Activated CD4-positive, alpha-beta T cell treated with anti-CD3 and anti-CD28 coated beads for 36 hours (primary cell): ENCODE measurements at regions of chr15 and their contacts with region 1.

Region 1: GRCh38 chr15:81939604-81940440 is 106.0 kb downstream of the MEX3B start:
- DNase-seq: peak; percentile 46
- ATAC-seq: peak; percentile 19
- H3K4me3 Mint-ChIP-seq: no peak overlapping the region
- H3K27ac Mint-ChIP-seq: no peak overlapping the region
- H3K4me1 Mint-ChIP-seq: no peaks in the 10 kb centered on the region
- H3K27me3 Mint-ChIP-seq: peaks cover 7% of the 10 kb centered on the region

Region 2: GRCh38 chr15:81410318-81410753 is 529.5 kb before region 1 on chr15:
- CTCF ChIA-PET with region 1: interaction called, 3 read pairs
- POLR2A ChIA-PET with region 1: no interaction called
- intact Hi-C with region 1: loop called in 1 of 2 experiments (anchors 1 kb)
- DNase-seq: peak; percentile 24
- ATAC-seq: peak; percentile 69
- H3K4me3 Mint-ChIP-seq: no peak overlapping the region
- H3K27ac Mint-ChIP-seq: no peak overlapping the region
- H3K4me1 Mint-ChIP-seq: peaks cover 14% of the 10 kb centered on the region
- H3K27me3 Mint-ChIP-seq: no peaks in the 10 kb centered on the region

Region 3: DNA sequence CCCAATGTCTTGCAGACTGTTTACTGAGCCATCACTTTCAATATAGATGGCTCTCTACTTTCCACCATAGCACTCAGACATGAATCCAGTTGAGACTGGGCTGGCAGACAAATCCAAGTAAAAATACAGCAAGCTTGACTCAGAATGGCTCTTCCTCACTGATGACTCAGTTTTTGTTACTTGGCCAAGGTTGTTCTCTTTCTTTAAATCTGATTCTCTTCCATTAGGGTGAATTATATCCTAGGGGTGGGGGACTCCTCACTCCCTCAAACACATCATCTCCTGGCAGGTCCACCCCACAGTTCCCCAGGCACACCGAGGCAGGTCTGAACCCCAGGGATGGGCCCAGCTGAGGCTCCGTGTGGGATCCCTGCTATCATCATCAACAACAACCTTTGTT is 51.9 kb before region 1 on chr15:
- CTCF ChIA-PET with region 1: no interaction called
- POLR2A ChIA-PET with region 1: no interaction called
- intact Hi-C with region 1: loop called in 1 of 2 experiments (anchors 10 kb)
- DNase-seq: no peak
- ATAC-seq: no peak
- H3K4me3 Mint-ChIP-seq: no peak overlapping the region
- H3K27ac Mint-ChIP-seq: no peak overlapping the region
- H3K4me1 Mint-ChIP-seq: no peaks in the 10 kb centered on the region
- H3K27me3 Mint-ChIP-seq: peaks cover 2% of the 10 kb centered on the region

Region 4: GRCh38 chr15:82093774-82094211 is 154.0 kb after region 1 on chr15:
- CTCF ChIA-PET with region 1: no interaction called
- POLR2A ChIA-PET with region 1: no interaction called
- intact Hi-C with region 1: no loop called
- DNase-seq: no peak
- ATAC-seq: no peak
- H3K4me3 Mint-ChIP-seq: no peak overlapping the region
- H3K27ac Mint-ChIP-seq: no peak overlapping the region
- H3K4me1 Mint-ChIP-seq: no peaks in the 10 kb centered on the region
- H3K27me3 Mint-ChIP-seq: no peaks in the 10 kb centered on the region